ENCODE measurements at regions of chr11 and their contacts with region 1.

Region 1: GRCh38 chr11:13297917-13298356 is 20.3 kb downstream of the BMAL1 start:
- DNase-seq: no peak
- ATAC-seq: peak; percentile 9 to 58 (median 50)
- H3K4me3 ChIP-seq: no peak overlapping the region
- H3K27ac ChIP-seq: peak overlapping the region in 1 of 10 donors; percentile 37
- H3K4me1 ChIP-seq: peaks cover 8 to 62% (median 46%) of the 10 kb centered on the region in 9 donors
- H3K27me3 ChIP-seq: no peaks in the 10 kb centered on the region
- CTCF ChIP-seq: no peak

Region 2: GRCh38 chr11:13114566-13115379 is 183.2 kb before region 1 on chr11:
- intact Hi-C with region 1: no loop called
- DNase-seq: no peak
- ATAC-seq: no peak
- H3K4me3 ChIP-seq: no peak overlapping the region
- H3K27ac ChIP-seq: no peak overlapping the region
- H3K4me1 ChIP-seq: peaks cover 0 to 25% (median 17%) of the 10 kb centered on the region in 9 donors
- H3K27me3 ChIP-seq: no peaks in the 10 kb centered on the region
- CTCF ChIP-seq: peak in 3 of 9 donors; percentile 6 to 17 (median 13)

Region 3: GRCh38 chr11:13238879-13239514 is 58.9 kb before region 1 on chr11:
- intact Hi-C with region 1: no loop called
- DNase-seq: peak; percentile 21 to 31
- ATAC-seq: peak in 4 of 8 donors; percentile 39 to 61 (median 50)
- H3K4me3 ChIP-seq: no peak overlapping the region
- H3K27ac ChIP-seq: no peak overlapping the region
- H3K4me1 ChIP-seq: no peaks in the 10 kb centered on the region
- H3K27me3 ChIP-seq: peaks cover 0 to 16% (median 8%) of the 10 kb centered on the region in 7 donors
- CTCF ChIP-seq: peak; percentile 62 to 84 (median 74)

Region 4: GRCh38 chr11:13316528-13316961 is 18.6 kb after region 1 on chr11:
- intact Hi-C with region 1: loop called in 1 of 10 experiments (anchors 1 kb)
- DNase-seq: peak in 1 of 2 donors; percentile 50
- ATAC-seq: peak; percentile 17 to 79 (median 39)
- H3K4me3 ChIP-seq: no peak overlapping the region
- H3K27ac ChIP-seq: peak overlapping the region in 3 of 10 donors; percentile 11 to 58 (median 24)
- H3K4me1 ChIP-seq: peaks cover 4 to 76% (median 55%) of the 10 kb centered on the region in 9 donors
- H3K27me3 ChIP-seq: no peaks in the 10 kb centered on the region
- CTCF ChIP-seq: no peak

Measured in heart right ventricle (tissue), 16 donors.